GM12878 (cell line): ENCODE measurements at regions of chr3 and their contacts with region 1.

Region 1: DNA sequence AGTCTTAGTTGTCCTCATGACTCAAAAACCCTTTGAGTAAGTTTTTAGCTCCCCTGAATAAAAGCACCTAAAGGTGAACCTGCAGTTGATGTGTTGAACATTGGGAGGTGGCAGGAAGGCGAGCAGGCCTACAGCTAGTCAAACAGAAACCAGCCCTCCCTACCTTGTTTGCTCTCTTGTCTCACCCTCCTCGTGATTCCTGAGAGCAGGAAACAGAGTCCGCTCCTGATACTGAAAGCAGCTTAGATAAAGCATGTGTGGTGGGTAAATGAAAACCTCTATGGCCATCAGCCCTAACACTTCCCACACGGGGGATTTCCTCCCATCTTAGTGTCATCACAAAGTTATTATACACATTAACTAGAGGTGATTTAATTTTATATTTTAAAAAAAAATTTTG is 21.8 kb upstream of the CLDN18 start:
- DNase-seq: peak; percentile 89
- ATAC-seq: peak; percentile 82
- H3K4me3 ChIP-seq: no peak overlapping the region
- H3K27ac ChIP-seq: peak overlapping the region; percentile 79
- H3K4me1 ChIP-seq: peaks cover 11% of the 10 kb centered on the region
- H3K27me3 ChIP-seq: no peaks in the 10 kb centered on the region
- CTCF ChIP-seq: no peak
- EP300 ChIP-seq: peak; percentile 78 to 90
- POLR2A ChIP-seq: no peak
- RAD21 ChIP-seq: no peak; the same call in 1 of the 2 replicates

Region 2: GRCh38 chr3:137330246-137330645 is 657.9 kb before region 1 on chr3:
- CTCF ChIA-PET with region 1: no interaction called
- POLR2A ChIA-PET with region 1: no interaction called
- RAD21 ChIA-PET with region 1: interaction called, 3 read pairs
- SMC1A ChIA-PET with region 1: no interaction called
- in situ Hi-C with region 1: no loop called
- intact Hi-C with region 1: loop called (anchors 2 kb)
- DNase-seq: peak; percentile 45
- ATAC-seq: peak; percentile 57
- H3K4me3 ChIP-seq: no peak overlapping the region
- H3K27ac ChIP-seq: peak overlapping the region; percentile 60
- H3K4me1 ChIP-seq: peaks cover 10% of the 10 kb centered on the region; the same call in 1 of the 2 replicates
- H3K27me3 ChIP-seq: no peaks in the 10 kb centered on the region
- CTCF ChIP-seq: no peak
- EP300 ChIP-seq: peak; percentile 84 to 92
- POLR2A ChIP-seq: no peak
- RAD21 ChIP-seq: 0 out of 2 replicates have a peak, but pooled peaks have one; percentile 2

Region 3: GRCh38 chr3:137970914-137971831 is 17.0 kb before region 1 on chr3:
- CTCF ChIA-PET with region 1: interaction called, 26 read pairs
- POLR2A ChIA-PET with region 1: no interaction called
- RAD21 ChIA-PET with region 1: no interaction called
- SMC1A ChIA-PET with region 1: interaction called, 5 read pairs
- in situ Hi-C with region 1: no loop called
- intact Hi-C with region 1: no loop called
- DNase-seq: no peak
- ATAC-seq: peak; percentile 99
- H3K4me3 ChIP-seq: no peak overlapping the region
- H3K27ac ChIP-seq: no peak overlapping the region
- H3K4me1 ChIP-seq: no peaks in the 10 kb centered on the region
- H3K27me3 ChIP-seq: no peaks in the 10 kb centered on the region
- CTCF ChIP-seq: peak; percentile 80 to 87 (median 86)
- EP300 ChIP-seq: no peak
- POLR2A ChIP-seq: no peak
- RAD21 ChIP-seq: peak; percentile 72

Region 4: DNA sequence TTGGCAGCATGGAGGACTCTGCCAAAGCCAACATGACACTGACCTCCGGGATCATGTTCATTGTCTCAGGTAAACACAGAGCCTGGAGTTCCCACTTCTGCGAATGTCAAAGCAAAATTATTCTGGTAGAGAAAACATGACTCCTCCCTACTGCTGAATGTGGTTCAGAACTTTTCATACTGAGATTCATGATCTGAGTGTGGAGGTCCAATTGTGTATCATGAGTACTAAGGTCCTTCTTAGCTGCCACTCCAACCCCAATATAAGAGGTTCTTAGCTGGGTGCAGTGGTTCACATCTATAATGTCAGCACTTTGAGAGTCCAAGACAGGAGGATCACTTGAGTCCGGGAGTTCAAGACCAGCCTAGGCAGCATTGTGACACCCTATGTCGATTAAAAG is 35.6 kb after region 1 on chr3:
- CTCF ChIA-PET with region 1: interaction called, 5 read pairs
- POLR2A ChIA-PET with region 1: interaction called, 7 read pairs
- RAD21 ChIA-PET with region 1: interaction called, 171 read pairs
- SMC1A ChIA-PET with region 1: interaction called, 114 read pairs
- in situ Hi-C with region 1: no loop called
- intact Hi-C with region 1: loop called (anchors 2 kb)
- DNase-seq: no peak
- ATAC-seq: peak; percentile 69
- H3K4me3 ChIP-seq: no peak overlapping the region
- H3K27ac ChIP-seq: peak overlapping the region; percentile 48
- H3K4me1 ChIP-seq: peaks cover 12% of the 10 kb centered on the region
- H3K27me3 ChIP-seq: no peaks in the 10 kb centered on the region
- CTCF ChIP-seq: no peak
- EP300 ChIP-seq: no peak
- POLR2A ChIP-seq: no peak
- RAD21 ChIP-seq: no peak

Region 5: DNA sequence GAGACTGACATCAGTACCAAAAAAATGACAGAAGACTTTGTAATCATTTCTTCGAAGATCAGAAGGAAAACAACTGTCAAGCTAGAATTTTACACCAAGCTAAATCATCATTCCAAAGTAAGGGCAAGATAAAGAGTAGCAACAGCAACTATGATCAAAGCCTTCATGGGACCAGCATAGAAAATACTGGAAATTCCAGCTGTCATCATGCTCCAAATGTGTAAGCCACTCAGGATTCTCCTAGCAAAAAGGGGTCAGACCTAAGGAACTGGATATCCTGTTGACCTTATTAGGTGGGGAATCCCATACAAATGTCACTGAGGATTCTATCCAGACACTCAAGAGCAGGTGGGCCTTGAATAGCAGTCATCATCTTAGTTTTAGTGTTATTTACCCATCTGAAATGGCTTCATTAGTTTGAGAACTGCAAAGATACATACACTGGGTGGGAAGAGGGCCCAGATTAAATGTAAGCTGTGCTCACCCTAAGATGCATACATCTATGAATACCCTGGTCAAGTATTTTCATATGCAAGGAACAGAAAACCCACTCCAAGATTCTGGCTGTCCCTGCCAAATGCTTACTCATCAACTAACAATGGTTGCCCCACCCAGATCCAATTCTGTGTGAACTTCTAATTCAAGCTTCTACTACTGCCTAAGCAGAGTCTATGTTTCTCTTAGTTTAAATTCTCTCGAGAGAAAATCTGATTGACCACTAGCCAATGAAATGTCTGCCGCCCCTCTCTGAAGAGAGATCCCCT is 55.3 kb after region 1 on chr3:
- CTCF ChIA-PET with region 1: interaction called, 7 read pairs
- POLR2A ChIA-PET with region 1: interaction called, 25 read pairs
- RAD21 ChIA-PET with region 1: interaction called, 171 read pairs
- SMC1A ChIA-PET with region 1: interaction called, 9 read pairs
- in situ Hi-C with region 1: no loop called
- intact Hi-C with region 1: loop called (anchors 1 kb)
- DNase-seq: no peak
- ATAC-seq: no peak
- H3K4me3 ChIP-seq: no peak overlapping the region
- H3K27ac ChIP-seq: no peak overlapping the region
- H3K4me1 ChIP-seq: peaks cover 29% of the 10 kb centered on the region
- H3K27me3 ChIP-seq: no peaks in the 10 kb centered on the region
- CTCF ChIP-seq: no peak
- EP300 ChIP-seq: no peak
- POLR2A ChIP-seq: no peak
- RAD21 ChIP-seq: no peak